ENCODE measurements at regions of chr14 and their contacts with region 1.

Region 1: GRCh38 chr14:60091550-60092530 is at the start of gene PCNX4:
- DNase-seq: peak; percentile 99
- total RNA-seq, gene PCNX4: 42.1 to 47.2 TPM

Region 2: DNA sequence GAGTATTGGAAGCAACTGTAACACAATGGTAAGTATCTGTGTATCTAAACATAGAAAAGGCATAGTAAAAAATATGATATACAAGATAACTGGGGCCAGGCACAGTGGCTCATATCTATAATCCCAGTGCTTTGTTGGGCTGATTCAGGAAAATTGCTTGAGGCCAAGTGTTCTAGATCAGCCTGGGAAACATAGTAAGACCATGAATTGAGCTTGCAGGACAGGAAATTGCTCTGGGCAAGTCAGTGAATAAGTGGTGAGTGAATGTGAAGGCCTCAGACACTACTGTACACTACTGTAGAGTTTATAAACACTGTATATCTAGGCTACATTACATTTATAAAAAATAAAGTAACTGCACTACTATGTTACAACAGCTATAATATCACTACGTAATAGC is 701.9 kb before region 1 on chr14:
- intact Hi-C with region 1: no loop called
- DNase-seq: no peak

Region 3: GRCh38 chr14:60079724-60080123 is 12.1 kb before region 1 on chr14:
- intact Hi-C with region 1: no loop called
- DNase-seq: no peak

Region 4: DNA sequence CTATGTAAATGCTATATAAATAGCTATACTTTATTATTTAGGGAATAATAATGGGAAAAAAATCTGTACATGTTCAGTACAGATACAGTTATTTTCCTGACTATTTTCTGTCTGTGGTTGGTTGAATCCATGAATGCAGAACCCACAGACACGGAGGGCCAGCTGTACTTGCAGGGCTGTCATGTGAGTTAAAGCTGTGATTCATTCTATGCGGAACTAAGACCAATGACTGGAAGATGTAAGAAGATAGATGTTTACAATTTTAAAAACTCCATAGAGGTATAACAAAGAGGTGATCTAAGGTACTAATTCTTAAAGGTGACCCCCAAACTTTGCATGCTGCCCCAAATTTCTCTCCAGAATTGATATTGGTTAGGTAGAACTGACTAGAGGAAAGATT is 14.5 kb after region 1 on chr14:
- intact Hi-C with region 1: loop called in 1 of 2 experiments (anchors 2 kb)
- DNase-seq: no peak

Region 5: DNA sequence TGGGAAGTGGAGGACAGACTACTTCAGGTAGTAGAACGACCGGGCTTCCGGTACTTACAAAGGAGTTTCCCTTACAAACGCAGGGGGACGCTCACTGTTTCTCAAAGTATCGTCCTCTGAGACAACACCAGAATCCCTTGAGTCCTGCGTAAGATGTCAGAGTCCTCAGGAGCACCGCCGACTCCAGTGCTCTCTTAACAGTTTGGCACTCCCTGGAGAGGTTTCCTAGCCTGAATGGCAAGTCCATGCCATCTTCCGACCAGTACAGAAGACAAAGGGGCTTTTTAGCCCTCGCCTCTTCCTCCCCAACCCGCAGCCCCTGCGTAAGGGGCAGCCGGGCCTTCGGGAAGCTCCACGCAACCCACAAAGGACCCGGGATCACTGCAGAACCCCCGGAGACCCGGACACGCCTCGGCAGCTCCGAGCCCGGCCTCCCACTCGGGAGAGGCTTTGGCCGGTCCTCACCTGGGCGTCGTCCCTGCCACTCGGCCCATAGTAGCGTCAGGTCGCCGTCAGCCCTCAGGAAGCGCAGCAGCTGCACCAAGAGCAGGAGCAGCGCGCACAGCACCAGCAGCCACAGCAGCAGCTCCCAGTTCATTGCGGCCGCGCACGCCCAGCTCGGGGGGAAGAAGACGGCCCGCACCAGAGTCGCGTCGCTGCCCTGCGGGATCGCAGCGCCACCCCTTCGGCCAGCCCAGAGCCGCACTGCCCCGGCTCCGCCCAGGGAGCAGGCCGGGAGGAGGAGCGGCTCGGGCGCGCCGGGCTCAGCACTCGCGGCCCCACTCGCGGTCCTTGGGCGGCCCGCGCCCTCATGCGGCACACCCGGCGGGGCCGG is 73.1 kb after region 1 on chr14 and contains the start of gene DHRS7:
- intact Hi-C with region 1: loop called in 1 of 2 experiments (anchors 5 kb)
- DNase-seq: peak; percentile 96
- total RNA-seq, gene DHRS7: 58.3 to 63.9 TPM